PC-9 (cell line): ENCODE measurements at regions of chr11 and their contacts with region 1.

Region 1: GRCh38 chr11:34134765-34135164 is 29.3 kb downstream of the NAT10 start:
- DNase-seq: no peak
- H3K4me3 ChIP-seq: no peak overlapping the region
- H3K27ac ChIP-seq: no peak overlapping the region
- H3K4me1 ChIP-seq: no peaks in the 10 kb centered on the region
- H3K27me3 ChIP-seq: no peaks in the 10 kb centered on the region
- CTCF ChIP-seq: no peak

Region 2: DNA sequence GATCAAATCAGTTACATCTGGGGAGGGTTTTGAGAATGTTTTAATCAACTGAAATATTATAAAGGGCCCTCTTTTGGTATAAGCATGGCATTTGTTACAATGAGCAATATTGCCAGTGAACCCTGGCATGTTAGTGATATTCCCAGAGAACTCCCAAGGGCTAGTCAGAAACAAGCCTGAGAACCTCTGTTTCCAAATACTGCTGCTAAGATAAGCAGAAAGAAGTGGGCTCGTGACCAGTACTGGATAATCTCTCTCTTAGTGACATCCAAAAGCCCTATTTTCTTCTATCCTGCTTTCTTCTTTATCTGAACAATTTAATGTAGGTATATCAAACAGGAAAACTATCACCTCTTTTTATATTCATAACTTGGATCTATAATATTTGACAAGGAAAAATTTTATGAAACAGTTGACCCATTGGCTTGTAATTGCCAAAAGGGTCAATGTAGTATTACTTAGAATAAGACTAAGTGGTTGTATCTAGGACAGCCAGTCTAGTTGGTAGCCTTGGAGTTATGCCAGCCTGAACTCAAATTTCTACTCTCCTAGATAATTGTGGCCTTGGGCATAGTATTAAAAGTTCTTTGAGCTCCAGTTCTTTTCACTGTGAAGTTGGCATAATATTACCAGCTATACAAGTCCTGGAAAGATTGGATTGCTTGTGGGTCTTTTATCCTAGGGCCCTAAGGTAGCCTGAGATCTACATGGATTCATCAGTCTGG is 319.7 kb after region 1 on chr11:
- CTCF ChIA-PET with region 1: no interaction called
- POLR2A ChIA-PET with region 1: interaction called, 11 read pairs
- intact Hi-C with region 1: no loop called
- DNase-seq: no peak
- H3K4me3 ChIP-seq: no peak overlapping the region
- H3K27ac ChIP-seq: no peak overlapping the region
- H3K4me1 ChIP-seq: no peaks in the 10 kb centered on the region
- H3K27me3 ChIP-seq: no peaks in the 10 kb centered on the region
- CTCF ChIP-seq: no peak